OCI-LY7 (cell line): ENCODE measurements at regions of chr5 and their contacts with region 1.

Region 1: GRCh38 chr5:6765612-6766525 is 52.6 kb downstream of the TENT4A start:
- DNase-seq: peak; percentile 64
- H3K4me3 ChIP-seq: no peak overlapping the region
- H3K27ac ChIP-seq: no peak overlapping the region
- H3K4me1 ChIP-seq: no peaks in the 10 kb centered on the region
- CTCF ChIP-seq: peak; percentile 84

Region 2: DNA sequence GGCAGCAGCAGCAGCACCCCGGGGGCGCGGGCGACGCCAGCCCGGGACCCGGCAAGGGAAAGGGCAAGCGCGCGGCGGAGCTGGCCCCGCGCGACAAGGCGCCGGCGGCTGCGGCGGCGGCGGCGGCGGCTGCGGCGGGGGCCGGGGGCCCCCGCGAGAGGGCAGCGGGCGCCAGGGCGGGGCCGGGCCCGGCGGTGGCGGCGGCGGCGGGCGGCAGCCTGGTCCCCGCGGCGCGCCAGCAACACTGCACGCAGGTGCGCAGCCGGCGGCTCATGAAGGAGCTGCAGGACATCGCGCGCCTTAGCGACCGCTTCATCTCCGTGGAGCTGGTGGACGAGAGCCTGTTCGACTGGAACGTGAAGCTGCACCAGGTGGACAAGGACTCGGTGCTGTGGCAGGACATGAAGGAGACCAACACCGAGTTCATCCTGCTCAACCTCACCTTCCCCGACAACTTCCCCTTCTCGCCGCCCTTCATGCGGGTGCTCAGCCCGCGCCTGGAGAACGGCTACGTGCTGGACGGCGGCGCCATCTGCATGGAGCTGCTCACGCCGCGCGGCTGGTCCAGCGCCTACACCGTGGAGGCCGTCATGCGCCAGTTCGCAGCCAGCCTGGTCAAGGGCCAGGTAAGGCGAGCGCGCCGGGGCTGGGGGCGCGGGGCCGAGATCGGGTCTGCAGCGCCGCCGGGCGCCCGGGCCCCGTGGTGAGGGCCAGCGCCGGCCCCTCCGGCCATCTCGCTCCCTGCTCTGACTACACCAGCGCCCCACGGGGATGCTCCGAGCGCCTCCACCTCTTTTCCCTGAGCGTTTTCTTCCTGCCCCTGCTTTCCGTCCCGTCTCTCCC is 317.0 kb before region 1 on chr5 and contains the start of gene UBE2QL1:
- CTCF ChIA-PET with region 1: no interaction called
- POLR2A ChIA-PET with region 1: no interaction called
- intact Hi-C with region 1: no loop called
- DNase-seq: no peak
- H3K4me3 ChIP-seq: no peak within 1 kb of the TSS
- H3K27ac ChIP-seq: no peak within 1 kb of the TSS
- H3K4me1 ChIP-seq: no peaks in the 10 kb centered on the region
- CTCF ChIP-seq: no peak
- total RNA-seq, gene UBE2QL1: not detected in 2 replicates

Region 3: DNA sequence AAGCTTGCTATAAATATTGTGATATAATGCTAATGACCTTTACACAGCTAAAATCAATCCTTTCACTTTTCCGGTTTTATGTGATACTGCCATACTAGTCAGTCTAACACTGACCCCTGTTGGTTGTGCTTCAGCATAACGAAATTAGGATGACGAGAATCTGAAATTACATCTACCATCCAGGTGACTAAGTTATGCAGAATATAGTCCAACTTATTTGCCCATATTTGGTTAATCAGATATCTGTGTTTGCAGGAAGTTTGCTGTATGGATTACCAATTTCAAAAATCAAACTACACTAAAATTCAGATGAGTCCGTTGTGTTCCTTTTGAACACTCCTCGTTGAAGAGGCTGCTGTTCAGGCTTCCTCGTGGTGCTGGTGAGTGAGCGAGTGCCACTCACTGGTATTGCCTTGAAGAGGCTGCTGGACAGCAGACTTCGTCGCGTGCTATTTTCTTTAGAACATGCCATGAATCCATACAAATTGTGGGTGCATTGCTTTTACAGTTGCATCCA is 20.1 kb before region 1 on chr5:
- CTCF ChIA-PET with region 1: no interaction called
- POLR2A ChIA-PET with region 1: no interaction called
- intact Hi-C with region 1: no loop called
- DNase-seq: peak; percentile 69
- H3K4me3 ChIP-seq: no peak overlapping the region
- H3K27ac ChIP-seq: no peak overlapping the region
- H3K4me1 ChIP-seq: peaks cover 11% of the 10 kb centered on the region
- CTCF ChIP-seq: peak; percentile 95

Region 4: DNA sequence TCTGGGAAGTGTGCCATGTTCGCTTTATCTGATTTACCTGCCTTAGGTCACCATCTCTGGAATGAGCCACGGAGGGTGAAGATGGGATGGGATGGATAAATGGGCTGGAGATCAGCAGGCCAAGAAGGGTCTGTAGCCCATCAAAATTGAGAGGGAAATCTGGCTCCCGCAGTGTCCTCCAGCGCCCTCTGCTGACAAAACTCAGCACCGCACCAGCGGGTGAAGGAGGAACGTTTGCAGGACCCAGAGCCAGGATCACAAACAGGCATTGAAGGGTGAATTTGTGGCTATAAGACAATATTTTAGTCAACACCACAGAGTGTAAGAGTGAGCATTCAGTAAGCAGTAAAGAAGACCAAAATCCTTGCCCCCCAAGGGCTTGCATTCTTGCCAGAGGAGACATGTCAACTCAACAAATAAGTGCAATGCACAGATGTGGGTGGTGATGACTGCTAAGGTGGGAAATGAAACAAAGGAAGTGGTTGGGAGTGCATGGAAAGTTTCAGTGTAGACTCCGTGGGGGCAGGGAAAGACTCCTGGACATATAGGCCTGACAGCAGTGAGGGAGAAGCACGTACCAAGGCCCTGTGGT is 71.7 kb after region 1 on chr5:
- CTCF ChIA-PET with region 1: no interaction called
- POLR2A ChIA-PET with region 1: no interaction called
- intact Hi-C with region 1: loop called (anchors 1 kb)
- DNase-seq: peak; percentile 43
- H3K4me3 ChIP-seq: no peak overlapping the region
- H3K27ac ChIP-seq: no peak overlapping the region
- H3K4me1 ChIP-seq: no peaks in the 10 kb centered on the region
- CTCF ChIP-seq: peak; percentile 97